Activated CD4-positive, alpha-beta T cell treated with anti-CD3 and anti-CD28 coated beads for 36 hours (primary cell): ENCODE measurements at regions of chr9 and their contacts with region 1.

Region 1: GRCh38 chr9:111483862-111484571 is at the start of gene ECPAS:
- DNase-seq: peak; percentile 83
- ATAC-seq: peak; percentile 79
- H3K4me3 Mint-ChIP-seq: peak within 1 kb of the TSS; percentile 81
- H3K27ac Mint-ChIP-seq: peak within 1 kb of the TSS; percentile 89
- H3K4me1 Mint-ChIP-seq: peaks cover 28% of the 10 kb centered on the region
- H3K27me3 Mint-ChIP-seq: no peaks in the 10 kb centered on the region
- total RNA-seq, gene ECPAS: 78.4 to 127 TPM

Region 2: GRCh38 chr9:111375817-111376564 is 108.0 kb before region 1 on chr9:
- CTCF ChIA-PET with region 1: no interaction called
- POLR2A ChIA-PET with region 1: no interaction called
- intact Hi-C with region 1: no loop called
- DNase-seq: no peak
- ATAC-seq: no peak
- H3K4me3 Mint-ChIP-seq: no peak overlapping the region
- H3K27ac Mint-ChIP-seq: no peak overlapping the region
- H3K4me1 Mint-ChIP-seq: no peaks in the 10 kb centered on the region
- H3K27me3 Mint-ChIP-seq: no peaks in the 10 kb centered on the region

Region 3: GRCh38 chr9:111525056-111525977 is 41.3 kb after region 1 on chr9 and contains the start of gene ZNF483:
- CTCF ChIA-PET with region 1: no interaction called
- POLR2A ChIA-PET with region 1: no interaction called
- intact Hi-C with region 1: loop called (anchors 1 kb)
- DNase-seq: peak; percentile 80
- ATAC-seq: peak; percentile 71
- H3K4me3 Mint-ChIP-seq: peak within 1 kb of the TSS; percentile 90
- H3K27ac Mint-ChIP-seq: peak within 1 kb of the TSS; percentile 87
- H3K4me1 Mint-ChIP-seq: peaks cover 25% of the 10 kb centered on the region
- H3K27me3 Mint-ChIP-seq: no peaks in the 10 kb centered on the region
- total RNA-seq, gene ZNF483: 2.5 to 3.0 TPM

Region 4: GRCh38 chr9:111631071-111631971 is 147.3 kb after region 1 on chr9 and contains the start of gene DNAJC25:
- CTCF ChIA-PET with region 1: no interaction called
- POLR2A ChIA-PET with region 1: no interaction called
- intact Hi-C with region 1: loop called (anchors 1 kb)
- DNase-seq: peak; percentile 98
- ATAC-seq: peak; percentile 98
- H3K4me3 Mint-ChIP-seq: peak within 1 kb of the TSS; percentile 94
- H3K27ac Mint-ChIP-seq: peak within 1 kb of the TSS; percentile 91
- H3K4me1 Mint-ChIP-seq: peaks cover 47% of the 10 kb centered on the region
- H3K27me3 Mint-ChIP-seq: no peaks in the 10 kb centered on the region
- total RNA-seq, gene DNAJC25: 6.3 to 7.5 TPM

Region 5: GRCh38 chr9:111661150-111661801 is 177.3 kb after region 1 on chr9 and contains the start of gene GNG10:
- CTCF ChIA-PET with region 1: no interaction called
- POLR2A ChIA-PET with region 1: no interaction called
- intact Hi-C with region 1: loop called in 1 of 2 experiments (anchors 1 kb)
- DNase-seq: peak; percentile 81
- ATAC-seq: peak; percentile 92
- H3K4me3 Mint-ChIP-seq: peak within 1 kb of the TSS; percentile 98
- H3K27ac Mint-ChIP-seq: peak within 1 kb of the TSS; percentile 95
- H3K4me1 Mint-ChIP-seq: peaks cover 25% of the 10 kb centered on the region
- H3K27me3 Mint-ChIP-seq: no peaks in the 10 kb centered on the region
- total RNA-seq, gene GNG10: 14.5 to 15.4 TPM

Region 6: GRCh38 chr9:112717661-112718341 is 1233.8 kb after region 1 on chr9 and contains the start of gene INIP:
- CTCF ChIA-PET with region 1: no interaction called
- POLR2A ChIA-PET with region 1: no interaction called
- intact Hi-C with region 1: loop called in 1 of 2 experiments (anchors 10 kb)
- DNase-seq: peak; percentile 99
- ATAC-seq: peak; percentile 93
- H3K4me3 Mint-ChIP-seq: peak within 1 kb of the TSS; percentile 89
- H3K27ac Mint-ChIP-seq: peak within 1 kb of the TSS; percentile 97
- H3K4me1 Mint-ChIP-seq: peaks cover 35% of the 10 kb centered on the region
- H3K27me3 Mint-ChIP-seq: no peaks in the 10 kb centered on the region
- total RNA-seq, gene INIP: 37.3 to 37.7 TPM